ENCODE measurements at regions of chr20 and their contacts with region 1.

Region 1: GRCh38 chr20:58246346-58246745 is 17.9 kb upstream of the ANKRD60 start:
- DNase-seq: peak in 1 of 4 experiments; percentile 38
- ATAC-seq: peak; percentile 75
- H3K4me3 ChIP-seq: no peak overlapping the region
- H3K27ac ChIP-seq: no peak overlapping the region
- H3K4me1 ChIP-seq: peaks cover 10 to 18% of the 10 kb centered on the region in 2 experiments; a peak in 4 of 5 replicates
- H3K27me3 ChIP-seq: no peaks in the 10 kb centered on the region
- CTCF ChIP-seq: peak; percentile 47 to 52 (median 50)
- EP300 ChIP-seq: no peak
- POLR2A ChIP-seq: no peak
- RAD21 ChIP-seq: peak; percentile 31 to 75; a peak in 3 of 4 replicates

Region 2: DNA sequence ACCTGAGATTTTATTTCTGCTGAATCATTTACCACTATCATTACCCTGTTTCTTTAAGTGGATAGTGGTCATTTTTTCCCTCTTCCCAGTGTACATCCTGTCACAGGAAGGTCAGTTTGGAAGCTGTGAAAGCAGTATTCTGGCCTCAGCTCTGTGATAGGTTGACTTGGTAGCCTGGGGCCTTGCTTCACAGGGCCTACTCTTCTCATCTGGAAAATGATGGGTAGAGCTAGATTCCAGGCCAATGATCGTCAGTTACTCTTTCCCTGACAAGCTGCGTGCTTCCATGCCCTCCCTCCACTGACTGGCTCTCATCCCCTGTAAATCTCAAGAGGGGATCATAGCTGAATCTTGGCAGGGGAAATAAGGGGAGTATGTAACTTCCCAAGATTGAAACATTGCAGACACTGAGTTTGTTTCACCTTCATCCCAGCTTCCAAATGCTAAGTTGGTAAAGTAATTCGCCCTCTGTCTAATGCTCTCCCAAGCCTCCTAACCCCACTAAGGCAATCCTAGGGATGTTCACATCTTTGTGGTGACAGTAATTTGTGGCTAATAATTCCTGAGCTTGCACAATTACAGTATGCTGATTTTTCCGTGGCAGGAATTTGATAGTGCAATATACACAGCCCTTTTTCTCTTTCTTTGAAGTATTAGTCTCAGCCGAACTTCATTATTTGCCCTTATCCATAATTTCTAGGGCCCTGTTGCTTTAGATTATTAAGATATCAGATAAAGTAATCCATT is 193.8 kb after region 1 on chr20:
- CTCF ChIA-PET with region 1: no interaction called
- POLR2A ChIA-PET with region 1: no interaction called
- in situ Hi-C with region 1: loop called (anchors 5 kb)
- intact Hi-C with region 1: no loop called
- DNase-seq: no peak
- ATAC-seq: no peak
- H3K4me3 ChIP-seq: no peak overlapping the region
- H3K27ac ChIP-seq: no peak overlapping the region
- H3K4me1 ChIP-seq: no peaks in the 10 kb centered on the region
- H3K27me3 ChIP-seq: no peaks in the 10 kb centered on the region
- CTCF ChIP-seq: no peak
- EP300 ChIP-seq: no peak
- POLR2A ChIP-seq: no peak
- RAD21 ChIP-seq: no peak

Measured in K562 (cell line).